ENCODE measurements at regions of chr19 and their contacts with region 1.

Region 1: DNA sequence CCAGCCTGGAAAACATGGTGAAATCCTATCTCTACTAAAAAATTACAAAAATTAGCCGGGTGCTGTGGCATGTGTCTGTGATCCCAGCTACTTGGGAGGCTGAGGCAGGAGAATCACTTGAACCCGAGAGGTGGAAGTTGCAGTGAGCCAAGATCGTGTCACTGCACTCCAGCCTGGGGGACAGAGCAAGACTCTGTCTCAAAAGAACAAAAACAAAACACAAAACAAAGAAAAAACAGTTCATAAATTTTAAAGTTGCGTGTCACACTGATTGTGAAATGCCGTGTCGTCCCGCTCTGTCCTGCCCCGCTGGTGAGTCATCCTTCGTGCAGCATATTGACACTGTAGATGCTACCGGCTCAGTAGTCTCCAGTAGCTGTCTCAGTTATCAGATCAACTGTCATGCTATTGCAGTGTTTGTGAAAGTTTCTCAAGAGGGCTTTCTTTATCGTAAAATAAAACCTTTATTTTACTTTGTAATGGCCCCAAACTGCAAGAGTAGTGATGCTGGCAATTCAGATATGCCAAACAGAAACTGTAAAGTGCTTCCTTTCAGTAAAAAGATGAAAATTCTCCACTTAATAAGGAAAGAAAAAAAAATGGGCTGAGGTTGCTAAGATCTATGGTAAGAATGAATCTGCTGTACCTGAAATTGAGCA is 36.4 kb upstream of the IGFL1 start:
- DNase-seq: peak; percentile 84 to 91
- ATAC-seq: peak; percentile 37 to 76; a peak in 4 of 6 replicates
- H3K4me3 ChIP-seq: no peak overlapping the region
- H3K27ac ChIP-seq: peak overlapping the region; percentile 64 to 83
- H3K4me1 ChIP-seq: peaks cover 95% of the 10 kb centered on the region
- CTCF ChIP-seq: no peak
- EP300 ChIP-seq: peak in 1 of 2 experiments; percentile 49; a peak in 2 of 5 replicates
- POLR2A ChIP-seq: no peak
- RAD21 ChIP-seq: peak in 1 of 2 experiments; percentile 39; a peak in 1 of 5 replicates

Region 2: DNA sequence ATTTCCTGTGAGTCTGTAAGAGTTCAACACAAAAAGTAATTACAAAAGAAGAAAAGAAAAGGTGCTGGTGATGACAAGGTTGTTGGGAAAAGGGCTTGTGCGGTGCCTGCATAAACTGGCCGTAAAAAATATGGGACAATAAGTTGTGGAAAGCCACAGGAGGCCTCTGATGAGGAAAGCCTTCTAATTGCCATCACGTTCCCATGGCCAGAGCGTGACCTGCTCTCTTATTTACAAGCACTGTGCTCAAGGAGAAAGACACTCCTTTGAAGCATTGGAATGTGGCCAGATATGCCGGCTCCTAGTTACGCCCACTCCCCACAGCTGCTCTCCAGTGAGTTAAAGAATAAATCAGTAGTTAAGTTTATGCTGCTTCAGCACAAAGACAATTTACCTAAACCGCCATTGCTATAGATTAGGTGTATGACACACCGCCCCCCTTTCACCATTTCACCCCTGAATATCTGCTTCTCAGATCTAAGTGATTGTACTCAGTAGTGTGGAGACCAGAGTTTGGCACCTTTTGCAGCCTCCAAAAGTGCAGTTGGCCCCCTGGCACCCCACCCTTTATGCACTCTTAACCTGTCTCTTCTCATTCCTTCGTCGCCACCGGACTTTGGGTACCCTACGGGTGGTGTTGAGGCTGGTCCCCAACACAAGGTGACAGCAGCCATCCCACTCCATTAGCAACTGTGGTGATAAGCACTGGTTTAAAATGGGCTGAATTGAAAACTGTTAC is 162.1 kb before region 1 on chr19:
- CTCF ChIA-PET with region 1: interaction called, 46 read pairs
- POLR2A ChIA-PET with region 1: no interaction called
- DNase-seq: no peak
- ATAC-seq: no peak
- H3K4me3 ChIP-seq: no peak overlapping the region
- H3K27ac ChIP-seq: peak overlapping the region in 1 of 2 experiments; percentile 39; a peak in 3 of 6 replicates
- H3K4me1 ChIP-seq: no peaks in the 10 kb centered on the region; the same call in 2 of the 3 replicates
- CTCF ChIP-seq: no peak
- EP300 ChIP-seq: no peak
- POLR2A ChIP-seq: no peak
- RAD21 ChIP-seq: no peak

Region 3: GRCh38 chr19:46141411-46141810 is 51.7 kb before region 1 on chr19:
- CTCF ChIA-PET with region 1: interaction called, 11 read pairs
- POLR2A ChIA-PET with region 1: no interaction called
- DNase-seq: no peak
- ATAC-seq: 0 out of 6 replicates have a peak, but pooled peaks of 1 of the 2 experiments have one; percentile 20
- H3K4me3 ChIP-seq: no peak overlapping the region
- H3K27ac ChIP-seq: no peak overlapping the region
- H3K4me1 ChIP-seq: 0 out of 3 replicates have a peak, but pooled peaks cover 2% of the 10 kb centered on the region
- CTCF ChIP-seq: no peak
- EP300 ChIP-seq: no peak
- POLR2A ChIP-seq: no peak
- RAD21 ChIP-seq: no peak

Region 4: DNA sequence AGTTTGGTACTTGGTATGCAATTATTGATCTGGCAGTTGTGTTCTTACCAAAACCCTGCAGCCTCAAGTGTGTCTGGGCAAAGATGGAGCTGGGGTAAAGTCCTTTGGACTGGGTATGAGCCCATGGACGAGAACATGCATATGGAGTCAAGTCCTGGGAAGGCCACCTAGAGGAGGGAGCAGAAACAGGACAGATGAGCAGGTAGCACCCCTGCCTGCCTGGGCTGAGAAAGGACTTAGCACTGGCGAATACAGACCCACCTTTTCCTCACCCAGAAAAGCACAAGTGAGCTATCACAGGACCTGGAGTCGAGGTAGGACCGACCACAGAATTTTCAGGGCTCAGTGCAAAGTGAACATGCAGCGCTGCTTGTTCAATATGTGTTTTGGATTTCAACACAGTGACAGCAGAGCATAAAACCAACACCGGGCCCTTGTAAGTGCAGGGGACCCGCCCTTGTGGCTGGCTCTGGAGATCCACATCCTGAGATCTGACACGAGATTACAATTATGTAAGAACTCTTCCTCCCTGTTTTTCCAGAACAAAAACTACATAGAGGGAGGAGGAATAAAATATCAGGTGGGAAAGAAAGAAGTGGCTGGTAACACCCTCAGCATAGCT is 19.1 kb before region 1 on chr19:
- CTCF ChIA-PET with region 1: interaction called, 26 read pairs
- POLR2A ChIA-PET with region 1: no interaction called
- DNase-seq: no peak
- ATAC-seq: peak; percentile 52 to 70; a peak in 4 of 6 replicates
- H3K4me3 ChIP-seq: no peak overlapping the region
- H3K27ac ChIP-seq: no peak overlapping the region
- H3K4me1 ChIP-seq: peaks cover 1% of the 10 kb centered on the region; the same call in 1 of the 3 replicates
- CTCF ChIP-seq: no peak
- EP300 ChIP-seq: no peak
- POLR2A ChIP-seq: no peak
- RAD21 ChIP-seq: no peak

Region 5: GRCh38 chr19:46218160-46218559 is 25.0 kb after region 1 on chr19:
- CTCF ChIA-PET with region 1: interaction called, 63 read pairs
- POLR2A ChIA-PET with region 1: interaction called, 6 read pairs
- DNase-seq: peak in 1 of 2 experiments; percentile 56
- ATAC-seq: no peak
- H3K4me3 ChIP-seq: no peak overlapping the region
- H3K27ac ChIP-seq: no peak overlapping the region
- H3K4me1 ChIP-seq: peaks cover 38% of the 10 kb centered on the region
- CTCF ChIP-seq: no peak
- EP300 ChIP-seq: no peak
- POLR2A ChIP-seq: no peak
- RAD21 ChIP-seq: no peak

Region 6: DNA sequence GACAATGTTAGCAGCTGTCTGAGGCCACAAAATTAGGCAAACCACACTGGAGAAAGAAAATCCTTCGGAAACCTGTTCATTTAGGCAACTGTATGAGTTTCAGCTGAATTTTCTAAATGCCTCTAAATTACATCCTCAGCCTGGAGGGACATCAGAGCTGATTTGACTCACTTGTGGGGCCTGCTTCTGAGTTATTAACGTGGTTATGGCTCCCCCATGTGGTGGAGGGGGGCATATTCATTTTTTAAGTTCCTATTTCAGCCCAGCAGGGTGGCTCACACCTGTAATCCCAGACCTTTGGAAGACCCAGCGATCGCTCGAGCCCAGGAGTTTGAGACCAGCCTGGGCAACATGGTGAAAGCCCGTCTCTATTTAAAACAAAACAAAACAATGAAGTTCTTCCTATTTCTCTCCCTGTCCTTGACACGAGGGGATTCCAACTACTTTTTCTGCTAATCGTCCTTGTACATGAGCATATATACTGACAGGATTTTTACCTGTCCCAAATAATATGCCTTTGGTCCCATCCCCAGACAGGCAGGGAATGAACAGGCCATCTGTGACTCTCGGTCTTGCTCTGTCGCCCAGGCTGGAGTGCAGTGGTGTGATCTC is 72.2 kb after region 1 on chr19:
- CTCF ChIA-PET with region 1: interaction called, 83 read pairs
- POLR2A ChIA-PET with region 1: no interaction called
- DNase-seq: peak; percentile 86 to 91
- ATAC-seq: peak; percentile 89 to 95
- H3K4me3 ChIP-seq: no peak overlapping the region
- H3K27ac ChIP-seq: peak overlapping the region; percentile 14 to 70; a peak in 5 of 6 replicates
- H3K4me1 ChIP-seq: peaks cover 19% of the 10 kb centered on the region
- CTCF ChIP-seq: peak; percentile 99
- EP300 ChIP-seq: no peak
- POLR2A ChIP-seq: no peak
- RAD21 ChIP-seq: peak; percentile 99

Region 7: GRCh38 chr19:46319613-46320012 is 126.5 kb after region 1 on chr19:
- CTCF ChIA-PET with region 1: no interaction called
- POLR2A ChIA-PET with region 1: no interaction called
- DNase-seq: no peak
- ATAC-seq: no peak
- H3K4me3 ChIP-seq: no peak overlapping the region
- H3K27ac ChIP-seq: no peak overlapping the region
- H3K4me1 ChIP-seq: no peaks in the 10 kb centered on the region
- CTCF ChIP-seq: no peak
- EP300 ChIP-seq: no peak
- POLR2A ChIP-seq: no peak
- RAD21 ChIP-seq: no peak